Activated CD4-positive, alpha-beta memory T cell treated with anti-CD3 and anti-CD28 coated beads for 36 hours (primary cell): ENCODE measurements at regions of chr15 and their contacts with region 1.

Region 1: DNA sequence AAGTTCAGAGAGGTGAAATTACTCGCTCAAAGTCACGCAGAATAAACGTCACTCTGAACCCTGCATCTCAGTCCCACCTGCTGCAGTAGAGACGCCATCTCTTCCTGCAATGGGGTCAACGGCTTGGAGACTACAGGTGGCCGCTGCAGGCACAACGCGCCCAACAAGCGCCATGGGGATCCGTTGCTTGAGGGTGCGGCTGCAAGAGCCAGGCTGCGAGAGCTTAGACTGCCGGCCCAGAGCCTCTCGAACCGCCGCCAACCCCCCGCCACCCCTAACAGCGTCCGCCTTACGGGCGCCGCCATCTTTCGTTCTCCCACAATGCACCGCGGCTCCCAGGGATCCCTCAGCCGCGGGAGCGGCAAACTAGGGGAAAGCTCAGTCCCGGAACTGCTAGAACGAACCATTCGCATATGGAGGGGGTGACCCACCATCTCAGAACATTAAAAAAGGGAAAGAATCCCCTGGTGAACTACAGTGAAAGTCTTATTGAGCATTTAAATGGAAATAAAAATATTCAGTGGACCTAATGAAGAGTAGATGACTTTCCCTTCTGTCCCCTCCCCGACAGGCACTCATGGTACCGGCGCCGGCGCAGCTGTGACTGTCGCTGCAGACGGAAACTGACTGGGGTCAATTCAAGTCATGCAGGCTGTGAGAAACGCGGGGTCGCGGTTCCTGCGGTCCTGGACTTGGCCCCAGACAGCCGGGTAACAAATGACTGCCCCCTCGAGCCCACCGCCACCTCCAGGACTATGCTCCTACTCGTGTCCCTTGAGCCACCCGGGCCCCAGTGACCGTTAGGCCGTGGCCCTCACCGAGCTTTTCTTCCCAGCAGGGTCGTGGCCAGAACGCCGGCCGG is at the starts of genes MRPL46 and MRPS11:
- DNase-seq: peak; percentile 91
- H3K4me3 Mint-ChIP-seq: peak within 1 kb of the TSS; percentile 93
- H3K27ac Mint-ChIP-seq: peak within 1 kb of the TSS; percentile 98
- H3K4me1 Mint-ChIP-seq: peaks cover 39% of the 10 kb centered on the region
- H3K27me3 Mint-ChIP-seq: no peaks in the 10 kb centered on the region
- total RNA-seq, gene MRPL46: 29.6 to 34.2 TPM
- total RNA-seq, gene MRPS11: 54.9 to 56.4 TPM

Region 2: DNA sequence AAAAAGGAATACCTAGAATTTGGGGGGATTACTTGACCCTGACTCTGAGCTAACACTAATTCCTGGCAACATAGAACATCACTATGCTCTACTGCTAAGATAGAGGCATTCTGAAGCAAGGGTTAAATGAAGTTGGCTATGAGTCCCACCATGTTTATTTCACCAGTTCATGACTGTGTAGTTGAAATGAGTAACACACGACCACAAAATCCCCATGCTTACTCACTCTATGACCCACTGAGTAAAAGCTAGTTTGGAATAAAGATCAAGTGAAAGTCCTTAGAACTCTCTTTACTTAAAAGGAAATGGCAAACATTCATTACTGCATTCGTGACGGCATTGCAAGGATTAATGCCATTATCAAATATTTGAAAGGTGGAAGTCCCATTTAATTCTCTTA is 47.5 kb before region 1 on chr15:
- CTCF ChIA-PET with region 1: no interaction called
- POLR2A ChIA-PET with region 1: no interaction called
- intact Hi-C with region 1: loop called (anchors 2 kb)
- DNase-seq: no peak
- H3K4me3 Mint-ChIP-seq: no peak overlapping the region
- H3K27ac Mint-ChIP-seq: no peak overlapping the region
- H3K4me1 Mint-ChIP-seq: peaks cover 16% of the 10 kb centered on the region
- H3K27me3 Mint-ChIP-seq: peaks cover 49% of the 10 kb centered on the region

Region 3: DNA sequence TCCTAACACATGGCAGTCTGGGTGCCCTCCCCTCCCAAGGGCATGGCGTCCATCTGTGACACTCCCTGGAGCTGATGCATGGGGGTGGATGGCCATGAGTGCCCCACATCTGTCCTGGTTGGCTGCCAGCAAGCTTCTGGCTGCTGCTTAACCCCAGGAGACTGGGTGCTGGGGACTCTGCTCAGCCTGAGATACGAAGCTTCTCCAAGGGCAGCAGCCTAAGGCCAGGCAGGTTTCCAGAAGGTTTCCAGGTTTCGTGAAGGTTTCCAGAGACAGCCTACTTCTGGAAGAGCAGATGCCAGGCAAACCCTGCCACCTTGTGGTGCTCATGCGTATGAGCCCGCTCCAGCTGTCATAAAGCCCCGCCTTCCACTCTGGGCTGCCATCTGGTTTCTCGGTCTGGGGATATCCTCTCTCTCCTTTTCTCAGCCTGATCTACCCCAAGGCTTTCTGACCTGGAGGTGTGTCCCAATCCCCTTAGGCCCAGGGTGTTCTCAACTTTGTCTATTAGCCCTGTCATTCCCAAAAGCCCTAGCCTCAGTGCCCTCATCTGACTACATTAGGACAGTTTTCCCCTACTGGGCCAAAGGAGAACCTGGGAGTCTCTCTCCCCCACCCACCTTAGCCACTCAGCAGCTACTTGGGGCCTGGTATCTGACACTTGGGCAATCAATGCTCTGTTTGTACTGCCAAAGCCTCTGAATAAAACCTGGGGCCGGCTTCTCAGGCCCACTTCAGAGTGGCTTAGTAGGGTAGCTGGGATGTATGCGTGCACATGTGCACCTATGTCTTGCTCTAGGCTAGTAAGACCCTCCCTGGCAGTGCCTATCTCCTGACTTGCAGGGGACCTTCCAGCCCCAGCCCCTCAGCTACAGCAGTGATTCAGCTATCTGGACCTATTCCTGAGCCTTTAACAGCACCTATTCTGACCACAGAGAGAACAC is 12.2 kb before region 1 on chr15:
- CTCF ChIA-PET with region 1: interaction called, 23 read pairs
- POLR2A ChIA-PET with region 1: no interaction called
- intact Hi-C with region 1: no loop called
- DNase-seq: peak; percentile 66
- H3K4me3 Mint-ChIP-seq: no peak overlapping the region
- H3K27ac Mint-ChIP-seq: no peak overlapping the region
- H3K4me1 Mint-ChIP-seq: peaks cover 4% of the 10 kb centered on the region
- H3K27me3 Mint-ChIP-seq: peaks cover 2% of the 10 kb centered on the region

Region 4: DNA sequence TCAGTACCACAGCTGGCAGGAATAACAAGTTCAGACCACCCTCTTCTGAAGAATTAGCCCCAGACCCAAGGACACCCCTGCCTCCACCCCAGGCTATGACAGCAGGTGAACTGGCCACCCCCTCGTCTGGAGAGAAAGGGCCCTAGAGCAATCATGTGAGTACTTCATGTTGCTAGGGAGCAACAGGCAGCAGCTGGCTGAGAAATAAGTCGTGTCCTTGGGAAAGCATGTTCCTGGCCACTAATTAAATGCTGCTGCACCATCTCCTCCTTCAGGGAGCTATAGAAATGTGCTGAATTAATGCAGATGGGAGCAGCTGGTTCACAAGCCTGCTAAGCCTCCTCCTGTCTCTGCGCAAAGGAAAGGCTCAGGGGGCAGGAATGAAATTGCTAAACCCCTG is 31.7 kb after region 1 on chr15:
- CTCF ChIA-PET with region 1: no interaction called
- POLR2A ChIA-PET with region 1: no interaction called
- intact Hi-C with region 1: no loop called
- DNase-seq: no peak
- H3K4me3 Mint-ChIP-seq: no peak overlapping the region
- H3K27ac Mint-ChIP-seq: no peak overlapping the region
- H3K4me1 Mint-ChIP-seq: no peaks in the 10 kb centered on the region
- H3K27me3 Mint-ChIP-seq: no peaks in the 10 kb centered on the region

Region 5: DNA sequence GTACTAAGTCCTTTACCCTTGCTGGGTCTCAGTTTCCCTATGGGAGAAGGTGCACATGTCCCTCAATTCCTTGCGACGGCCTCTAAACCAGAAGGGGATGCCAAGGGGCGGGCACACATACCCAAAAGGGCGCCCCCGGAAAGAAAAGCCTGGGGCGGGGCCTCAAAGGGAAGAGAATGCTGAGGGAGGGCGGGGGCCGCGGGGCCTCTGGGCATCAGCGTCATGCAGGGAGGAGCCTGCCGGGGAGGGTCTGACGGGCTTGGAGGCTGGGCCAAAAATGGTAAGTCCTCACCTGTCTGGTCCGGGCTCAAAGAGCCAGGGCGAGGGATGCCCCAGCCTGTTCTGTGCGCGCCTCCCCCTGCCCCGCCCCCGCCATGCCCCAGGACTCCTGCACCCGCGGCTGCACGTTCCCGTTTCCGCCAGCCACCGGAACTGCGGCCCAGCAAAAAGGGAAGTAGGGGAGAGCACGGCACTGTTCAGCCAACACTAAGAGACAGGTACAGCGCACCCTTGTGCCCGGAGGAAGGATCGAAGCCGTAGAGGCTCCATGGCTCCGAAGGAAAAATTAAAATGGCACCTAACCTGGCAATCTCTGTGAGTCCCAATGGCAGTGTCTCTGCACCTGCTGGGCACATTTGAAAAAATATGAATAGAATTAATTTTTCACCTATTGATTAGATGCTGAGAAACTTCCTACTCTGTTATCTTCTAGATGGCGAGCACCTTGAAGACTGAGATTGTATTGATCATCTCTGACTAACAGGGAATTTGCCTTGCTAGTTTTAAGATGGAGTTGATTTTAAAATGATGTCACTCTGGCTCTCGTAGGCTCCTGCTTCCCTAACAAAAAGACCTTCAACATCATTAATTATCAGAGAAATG is 79.2 kb after region 1 on chr15 and contains the start of gene DET1:
- CTCF ChIA-PET with region 1: no interaction called
- POLR2A ChIA-PET with region 1: interaction called, 3 read pairs
- intact Hi-C with region 1: loop called (anchors 1 kb)
- DNase-seq: peak; percentile 98
- H3K4me3 Mint-ChIP-seq: peak within 1 kb of the TSS; percentile 88
- H3K27ac Mint-ChIP-seq: peak within 1 kb of the TSS; percentile 89
- H3K4me1 Mint-ChIP-seq: peaks cover 13% of the 10 kb centered on the region
- H3K27me3 Mint-ChIP-seq: no peaks in the 10 kb centered on the region
- total RNA-seq, gene DET1: 1.9 to 2.2 TPM

Region 6: GRCh38 chr15:88638626-88639372 is 171.5 kb after region 1 on chr15 and contains the start of gene ISG20:
- CTCF ChIA-PET with region 1: interaction called, 12 read pairs
- POLR2A ChIA-PET with region 1: interaction called, 4 read pairs
- intact Hi-C with region 1: no loop called
- DNase-seq: peak; percentile 99
- H3K4me3 Mint-ChIP-seq: peak within 1 kb of the TSS; percentile 82
- H3K27ac Mint-ChIP-seq: peak within 1 kb of the TSS; percentile 99
- H3K4me1 Mint-ChIP-seq: peaks cover 74% of the 10 kb centered on the region
- H3K27me3 Mint-ChIP-seq: no peaks in the 10 kb centered on the region
- total RNA-seq, gene ISG20: 68.2 to 74.5 TPM

Region 7: DNA sequence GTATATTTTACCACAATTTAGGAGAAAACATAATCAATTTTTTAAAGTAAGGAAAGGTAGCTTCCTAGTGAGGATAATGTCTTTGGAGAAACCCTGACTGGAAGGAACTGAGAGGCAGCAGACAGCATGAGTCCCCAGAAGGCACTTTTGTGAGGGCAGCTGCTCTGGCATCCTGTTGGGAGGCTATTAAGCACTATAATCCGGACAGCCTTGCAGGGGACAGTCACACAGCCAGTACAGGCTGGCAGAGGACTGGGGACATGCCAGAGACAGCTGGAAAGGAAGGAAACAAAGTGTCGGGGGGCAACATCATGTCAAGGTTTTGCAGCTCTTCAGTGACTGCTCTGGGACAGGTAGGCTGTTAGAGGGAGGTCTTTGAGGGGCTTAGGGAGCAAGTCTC is 351.6 kb after region 1 on chr15:
- CTCF ChIA-PET with region 1: no interaction called
- POLR2A ChIA-PET with region 1: no interaction called
- intact Hi-C with region 1: no loop called
- DNase-seq: no peak
- H3K4me3 Mint-ChIP-seq: no peak overlapping the region
- H3K27ac Mint-ChIP-seq: no peak overlapping the region
- H3K4me1 Mint-ChIP-seq: no peaks in the 10 kb centered on the region
- H3K27me3 Mint-ChIP-seq: peaks cover 8% of the 10 kb centered on the region